Heart left ventricle (tissue), 16 donors: ENCODE measurements at regions of chr1 and their contacts with region 1.

Region 1: GRCh38 chr1:235999259-235999925 is 65.5 kb downstream of the NID1 start:
- DNase-seq: peak in 4 of 5 donors; percentile 49 to 68 (median 56)
- ATAC-seq: peak; percentile 19 to 79 (median 57)
- H3K4me3 ChIP-seq: no peak overlapping the region
- H3K27ac ChIP-seq: peak overlapping the region; percentile 32 to 85 (median 66)
- H3K4me1 ChIP-seq: peaks cover 0 to 38% (median 18%) of the 10 kb centered on the region in 12 donors
- H3K27me3 ChIP-seq: no peaks in the 10 kb centered on the region
- CTCF ChIP-seq: no peak
- POLR2A ChIP-seq: no peak

Region 2: DNA sequence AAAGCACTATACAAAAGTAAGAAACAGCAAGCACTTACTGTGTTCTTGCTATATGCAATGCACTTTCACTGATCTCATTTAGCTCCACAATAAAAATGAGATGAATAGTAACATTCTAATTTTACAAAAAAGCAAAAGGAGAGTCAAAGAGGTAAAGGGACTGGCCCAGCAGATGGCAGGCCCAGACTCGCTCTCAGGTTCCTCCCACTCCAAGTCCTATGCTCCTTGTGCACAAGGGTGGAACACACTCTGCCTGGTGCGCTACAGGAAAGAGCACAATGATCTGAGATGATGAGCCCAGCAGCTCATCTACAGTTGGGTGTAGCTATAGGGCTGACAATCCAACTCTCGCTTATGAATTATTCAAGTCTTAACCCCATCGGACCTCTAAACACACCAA is 38.6 kb before region 1 on chr1:
- intact Hi-C with region 1: no loop called
- DNase-seq: no peak
- ATAC-seq: no peak
- H3K4me3 ChIP-seq: no peak overlapping the region
- H3K27ac ChIP-seq: no peak overlapping the region
- H3K4me1 ChIP-seq: peaks cover 0 to 7% (median 0%) of the 10 kb centered on the region in 12 donors
- H3K27me3 ChIP-seq: no peaks in the 10 kb centered on the region
- CTCF ChIP-seq: no peak
- POLR2A ChIP-seq: no peak

Region 3: DNA sequence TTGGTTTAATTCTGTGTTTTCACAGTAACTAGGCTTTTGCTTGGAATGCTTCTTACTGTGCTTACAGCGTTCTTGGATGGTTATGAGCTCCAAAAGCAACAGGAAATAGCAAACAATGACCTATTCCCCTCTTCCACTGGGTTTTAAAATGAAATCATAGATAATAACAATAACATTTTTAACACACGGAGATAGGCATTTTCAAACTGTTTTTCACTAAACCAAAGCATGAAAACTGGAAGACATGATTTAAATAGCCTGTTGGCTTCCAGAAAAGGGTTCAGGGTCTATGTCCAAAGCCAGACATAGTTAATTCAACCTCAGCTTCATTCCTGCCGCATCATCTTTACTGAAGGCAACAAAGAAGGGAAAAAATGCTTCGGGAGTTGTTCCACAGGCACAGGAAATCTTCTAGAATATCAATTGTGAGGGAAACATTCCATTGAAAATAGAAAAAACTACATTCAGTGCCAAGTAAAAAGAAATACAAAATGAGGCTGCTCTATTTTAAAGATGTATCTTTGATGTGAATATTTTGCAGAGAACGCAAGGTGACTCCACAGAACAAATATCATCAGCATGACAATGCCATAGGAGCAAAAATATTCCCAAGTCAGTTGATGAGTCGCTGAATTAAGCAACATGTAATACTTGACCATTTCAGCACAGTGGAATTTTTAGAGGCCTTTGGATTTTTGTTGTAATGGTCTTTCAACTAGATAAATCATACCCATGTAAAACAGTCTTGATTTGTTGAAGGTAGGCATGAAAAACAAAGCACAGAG is 15.2 kb before region 1 on chr1:
- intact Hi-C with region 1: loop called in 1 of 10 experiments (anchors 2 kb)
- DNase-seq: no peak
- ATAC-seq: peak in 2 of 4 donors; percentile 33 to 70
- H3K4me3 ChIP-seq: peak overlapping the region in 1 of 12 donors; percentile 2
- H3K27ac ChIP-seq: peak overlapping the region; percentile 49 to 88 (median 67)
- H3K4me1 ChIP-seq: peaks cover 0 to 65% (median 42%) of the 10 kb centered on the region in 12 donors
- H3K27me3 ChIP-seq: no peaks in the 10 kb centered on the region
- CTCF ChIP-seq: no peak
- POLR2A ChIP-seq: no peak

Region 4: DNA sequence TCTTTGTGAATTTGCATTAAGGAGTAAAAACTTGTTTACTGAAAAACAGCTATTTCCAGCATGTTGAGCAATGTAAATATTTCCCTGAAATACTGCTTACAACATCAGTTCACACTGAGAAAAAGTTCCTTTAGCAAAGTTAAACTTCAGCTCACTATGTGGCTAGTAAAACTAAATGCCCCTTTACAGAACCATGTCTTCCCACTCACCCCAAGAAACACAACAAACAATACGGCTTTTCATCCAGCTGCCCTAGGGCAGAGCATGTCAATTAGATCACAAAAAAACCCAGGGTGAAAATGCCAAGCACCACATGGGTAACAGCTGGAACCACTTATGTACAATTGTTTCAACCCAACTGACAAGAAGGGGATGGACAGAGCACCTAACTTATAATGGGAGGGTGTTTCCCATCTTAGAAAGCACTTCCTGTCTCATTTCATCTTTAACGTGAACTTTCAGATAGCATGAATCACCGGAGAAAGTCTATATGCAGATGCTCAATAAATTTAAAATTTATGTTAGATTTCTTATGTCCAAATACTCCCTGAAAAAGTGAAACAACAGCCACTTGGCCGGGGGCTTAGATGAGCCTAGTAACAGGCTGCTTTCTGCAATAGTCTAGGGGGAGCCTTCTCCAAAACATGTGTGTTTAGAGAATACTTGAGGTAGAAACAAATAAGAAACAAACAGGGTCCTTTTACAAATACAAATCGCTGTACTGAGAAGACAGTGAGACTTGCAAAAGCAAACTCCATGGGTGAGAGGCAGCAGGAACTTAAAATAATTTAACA is 58.9 kb after region 1 on chr1:
- intact Hi-C with region 1: loop called in 2 of 10 experiments (anchors 10 kb)
- DNase-seq: no peak
- ATAC-seq: peak in 2 of 4 donors; percentile 16 to 19
- H3K4me3 ChIP-seq: peak overlapping the region in 7 of 12 donors; percentile 4 to 41 (median 10)
- H3K27ac ChIP-seq: peak overlapping the region in 8 of 12 donors; percentile 8 to 100 (median 46)
- H3K4me1 ChIP-seq: peaks cover 3 to 69% (median 49%) of the 10 kb centered on the region in 12 donors
- H3K27me3 ChIP-seq: no peaks in the 10 kb centered on the region
- CTCF ChIP-seq: no peak
- POLR2A ChIP-seq: no peak